ENCODE measurements at regions of chr9 and their contacts with region 1.

Region 1: GRCh38 chr9:96327694-96328352 is 25.8 kb upstream of the HSD17B3 start:
- DNase-seq: peak; percentile 26 to 55 (median 44)
- H3K4me3 ChIP-seq: no peak overlapping the region
- H3K4me3 Mint-ChIP-seq: no peak overlapping the region
- H3K27ac ChIP-seq: no peak overlapping the region
- H3K27ac Mint-ChIP-seq: no peak overlapping the region
- H3K4me1 ChIP-seq: no peaks in the 10 kb centered on the region
- H3K4me1 Mint-ChIP-seq: no peaks in the 10 kb centered on the region
- H3K27me3 ChIP-seq: no peaks in the 10 kb centered on the region
- H3K27me3 Mint-ChIP-seq: peaks cover 0 to 2% (median 2%) of the 10 kb centered on the region in 3 donors
- CTCF ChIP-seq: peak; percentile 92

Region 2: DNA sequence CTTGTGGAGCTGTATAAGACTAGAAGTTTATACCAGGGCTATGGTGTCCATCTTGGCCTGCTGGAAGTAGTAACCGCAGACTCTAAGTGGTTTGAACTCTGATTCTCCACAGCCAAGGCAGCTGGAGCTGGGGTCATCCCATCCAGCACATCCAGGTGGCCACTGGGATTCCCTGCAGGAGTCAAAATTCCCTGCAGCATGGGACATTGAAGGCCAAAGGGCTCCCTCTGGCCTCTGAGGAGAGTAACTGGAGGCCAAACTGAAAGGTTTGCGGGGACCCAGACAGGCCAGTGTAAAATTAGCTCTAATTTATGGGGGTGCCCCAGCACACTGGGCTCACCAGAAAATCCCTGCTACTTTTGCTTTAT is 339.5 kb after region 1 on chr9:
- intact Hi-C with region 1: loop called in 1 of 2 experiments (anchors 5 kb)
- DNase-seq: no peak
- H3K4me3 ChIP-seq: no peak overlapping the region
- H3K4me3 Mint-ChIP-seq: no peak overlapping the region
- H3K27ac ChIP-seq: no peak overlapping the region
- H3K27ac Mint-ChIP-seq: no peak overlapping the region
- H3K4me1 ChIP-seq: no peaks in the 10 kb centered on the region
- H3K4me1 Mint-ChIP-seq: no peaks in the 10 kb centered on the region
- H3K27me3 ChIP-seq: no peaks in the 10 kb centered on the region
- H3K27me3 Mint-ChIP-seq: peaks cover 2 to 4% (median 3%) of the 10 kb centered on the region in 3 donors
- CTCF ChIP-seq: no peak

Region 3: GRCh38 chr9:97529363-97530076 is 1201.7 kb after region 1 on chr9:
- intact Hi-C with region 1: no loop called
- DNase-seq: no peak
- H3K4me3 ChIP-seq: no peak overlapping the region
- H3K4me3 Mint-ChIP-seq: no peak overlapping the region
- H3K27ac ChIP-seq: no peak overlapping the region
- H3K27ac Mint-ChIP-seq: peak overlapping the region in 1 of 7 donors; percentile 2
- H3K4me1 ChIP-seq: no peaks in the 10 kb centered on the region
- H3K4me1 Mint-ChIP-seq: peaks cover 2% of the 10 kb centered on the region
- H3K27me3 ChIP-seq: no peaks in the 10 kb centered on the region
- H3K27me3 Mint-ChIP-seq: peaks cover 1 to 3% (median 3%) of the 10 kb centered on the region in 3 donors
- CTCF ChIP-seq: no peak

Measured in CD14-positive monocyte (primary cell).